CD4-positive, alpha-beta T cell (primary cell): ENCODE measurements at regions of chr2 and their contacts with region 1.

Region 1: GRCh38 chr2:37156857-37157714 is at the start of gene EIF2AK2:
- DNase-seq: peak; percentile 68 to 92 (median 77)
- ATAC-seq: peak; percentile 97
- H3K4me3 ChIP-seq: peak within 1 kb of the TSS; percentile 96
- H3K4me3 Mint-ChIP-seq: peak within 1 kb of the TSS; percentile 97
- H3K27ac ChIP-seq: peak within 1 kb of the TSS; percentile 44 to 64
- H3K27ac Mint-ChIP-seq: peak within 1 kb of the TSS; percentile 95
- H3K4me1 ChIP-seq: peaks cover 31% of the 10 kb centered on the region
- H3K4me1 Mint-ChIP-seq: peaks cover 49% of the 10 kb centered on the region
- H3K27me3 ChIP-seq: no peaks in the 10 kb centered on the region
- H3K27me3 Mint-ChIP-seq: no peaks in the 10 kb centered on the region
- CTCF ChIP-seq: no peak
- total RNA-seq, gene EIF2AK2: 29.1 to 31.1 TPM

Region 2: GRCh38 chr2:36966370-36967235 is 190.5 kb before region 1 on chr2 and contains the start of gene STRN:
- CTCF ChIA-PET with region 1: no interaction called
- POLR2A ChIA-PET with region 1: interaction called, 12 read pairs
- intact Hi-C with region 1: loop called in 1 of 2 experiments (anchors 5 kb)
- DNase-seq: peak; percentile 93 to 99 (median 98)
- ATAC-seq: peak; percentile 88
- H3K4me3 ChIP-seq: peak within 1 kb of the TSS; percentile 86
- H3K4me3 Mint-ChIP-seq: peak within 1 kb of the TSS; percentile 99
- H3K27ac ChIP-seq: peak within 1 kb of the TSS; percentile 89 to 90
- H3K27ac Mint-ChIP-seq: peak within 1 kb of the TSS; percentile 97
- H3K4me1 ChIP-seq: peaks cover 26% of the 10 kb centered on the region
- H3K4me1 Mint-ChIP-seq: peaks cover 58% of the 10 kb centered on the region
- H3K27me3 ChIP-seq: no peaks in the 10 kb centered on the region
- H3K27me3 Mint-ChIP-seq: no peaks in the 10 kb centered on the region
- CTCF ChIP-seq: no peak
- total RNA-seq, gene STRN: 20.4 to 20.8 TPM

Region 3: GRCh38 chr2:37196320-37197195 is 39.5 kb after region 1 on chr2 and contains the start of gene CEBPZOS:
- CTCF ChIA-PET with region 1: no interaction called
- POLR2A ChIA-PET with region 1: interaction called, 12 read pairs
- intact Hi-C with region 1: loop called (anchors 2 to 5 kb)
- DNase-seq: peak; percentile 81 to 94 (median 90)
- ATAC-seq: peak; percentile 87
- H3K4me3 ChIP-seq: peak within 1 kb of the TSS; percentile 87
- H3K4me3 Mint-ChIP-seq: peak within 1 kb of the TSS; percentile 99
- H3K27ac ChIP-seq: peak within 1 kb of the TSS; percentile 70 to 82
- H3K27ac Mint-ChIP-seq: peak within 1 kb of the TSS; percentile 95
- H3K4me1 ChIP-seq: peaks cover 34% of the 10 kb centered on the region
- H3K4me1 Mint-ChIP-seq: peaks cover 35% of the 10 kb centered on the region
- H3K27me3 ChIP-seq: no peaks in the 10 kb centered on the region
- H3K27me3 Mint-ChIP-seq: no peaks in the 10 kb centered on the region
- CTCF ChIP-seq: no peak
- total RNA-seq, gene CEBPZOS: 23.4 to 24.6 TPM

Region 4: DNA sequence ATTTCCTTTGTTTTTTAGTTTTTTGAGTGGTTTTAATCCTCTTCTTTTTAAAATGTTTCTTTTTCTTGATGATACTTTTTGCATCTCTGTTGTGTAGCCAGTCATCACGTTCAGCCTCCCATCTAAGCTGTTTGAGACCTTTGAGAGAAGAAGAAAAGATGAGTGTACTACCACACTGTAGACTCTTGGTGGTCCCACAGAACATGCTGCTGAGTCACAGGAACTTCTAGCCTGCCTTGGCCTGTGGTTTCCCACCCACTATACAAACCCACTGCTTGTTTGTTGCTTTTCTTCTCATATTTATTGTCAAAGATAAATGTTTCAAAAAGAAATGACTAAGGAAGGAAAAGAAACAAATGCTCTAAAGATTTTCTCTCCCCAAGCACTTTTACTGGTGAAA is 44.7 kb after region 1 on chr2:
- CTCF ChIA-PET with region 1: no interaction called
- POLR2A ChIA-PET with region 1: interaction called, 12 read pairs
- intact Hi-C with region 1: loop called (anchors 2 to 5 kb)
- DNase-seq: peak in 1 of 14 experiments; percentile 32
- ATAC-seq: no peak
- H3K4me3 ChIP-seq: no peak overlapping the region
- H3K4me3 Mint-ChIP-seq: no peak overlapping the region
- H3K27ac ChIP-seq: no peak overlapping the region
- H3K27ac Mint-ChIP-seq: peak overlapping the region; percentile 42
- H3K4me1 ChIP-seq: peaks cover 26% of the 10 kb centered on the region
- H3K4me1 Mint-ChIP-seq: peaks cover 48% of the 10 kb centered on the region
- H3K27me3 ChIP-seq: no peaks in the 10 kb centered on the region
- H3K27me3 Mint-ChIP-seq: no peaks in the 10 kb centered on the region
- CTCF ChIP-seq: no peak

Region 5: GRCh38 chr2:37365669-37366068 is 208.6 kb after region 1 on chr2:
- CTCF ChIA-PET with region 1: no interaction called
- POLR2A ChIA-PET with region 1: no interaction called
- intact Hi-C with region 1: no loop called
- DNase-seq: peak in 1 of 14 experiments; percentile 31
- ATAC-seq: no peak
- H3K4me3 ChIP-seq: no peak overlapping the region
- H3K4me3 Mint-ChIP-seq: no peak overlapping the region
- H3K27ac ChIP-seq: no peak overlapping the region
- H3K27ac Mint-ChIP-seq: no peak overlapping the region
- H3K4me1 ChIP-seq: peaks cover 21% of the 10 kb centered on the region
- H3K4me1 Mint-ChIP-seq: no peaks in the 10 kb centered on the region
- H3K27me3 ChIP-seq: peaks cover 8 to 18% of the 10 kb centered on the region in 2 experiments
- H3K27me3 Mint-ChIP-seq: peaks cover 23% of the 10 kb centered on the region
- CTCF ChIP-seq: no peak